WTC11 (cell line): ENCODE measurements at regions of chr4 and their contacts with region 1.

Region 1: DNA sequence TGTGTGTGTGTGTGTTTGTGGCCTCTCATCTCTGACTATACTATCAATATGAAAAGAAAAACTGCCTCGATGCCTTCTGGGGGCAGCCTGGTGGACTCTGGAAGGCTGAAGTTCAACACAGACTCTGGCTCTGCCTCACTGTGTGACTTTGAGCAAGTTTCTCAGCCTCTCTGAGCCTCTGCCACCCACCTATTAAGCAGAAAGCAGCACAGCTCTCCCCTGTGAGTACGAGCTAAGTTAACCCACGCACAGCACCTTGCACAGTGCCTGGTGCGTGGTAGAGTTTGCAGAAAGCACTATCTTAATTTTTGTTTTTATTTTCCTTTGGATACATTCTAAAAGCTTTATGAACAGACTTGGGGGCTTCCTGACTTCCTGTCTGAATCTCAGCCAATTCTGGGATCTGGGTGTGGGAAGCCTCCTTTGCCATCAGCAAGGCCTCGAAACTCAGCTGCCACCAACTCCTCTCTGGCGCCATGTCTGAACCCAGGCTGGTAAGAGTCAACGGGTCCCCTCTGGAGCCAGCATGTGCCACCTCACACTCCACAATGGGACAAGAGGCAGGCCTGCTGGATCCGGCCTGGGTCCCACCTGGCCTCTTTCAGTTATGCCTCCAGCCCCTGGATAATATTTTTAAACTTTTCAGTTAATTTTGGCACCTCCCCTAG is 57.3 kb downstream of the JAKMIP1 start:
- DNase-seq: no peak
- ATAC-seq: no peak
- H3K4me3 Mint-ChIP-seq: no peak overlapping the region
- H3K27ac Mint-ChIP-seq: no peak overlapping the region
- H3K4me1 Mint-ChIP-seq: peaks cover 8% of the 10 kb centered on the region
- H3K27me3 Mint-ChIP-seq: no peaks in the 10 kb centered on the region
- CTCF ChIP-seq: no peak

Region 2: DNA sequence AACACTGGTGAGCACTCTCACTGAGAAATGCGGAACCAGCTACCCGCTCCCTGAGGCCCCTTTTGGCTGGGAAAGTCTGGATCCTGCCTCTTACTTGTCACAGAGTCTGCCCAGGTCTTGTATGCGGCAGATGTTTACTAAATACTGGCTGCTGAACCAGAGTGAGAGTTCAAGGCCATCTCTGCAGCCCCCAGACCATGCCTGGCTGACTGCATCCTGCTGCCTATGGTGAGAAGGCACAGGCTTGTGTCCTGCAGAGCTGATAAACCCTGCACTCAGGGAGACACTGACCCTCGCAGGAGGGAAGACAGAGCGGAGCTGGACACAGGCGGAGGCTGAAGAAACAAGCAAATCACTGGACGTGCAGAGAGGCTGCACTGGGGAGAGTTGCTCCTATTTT is 10.8 kb after region 1 on chr4:
- CTCF ChIA-PET with region 1: interaction called, 10 read pairs
- POLR2A ChIA-PET with region 1: no interaction called
- DNase-seq: no peak
- ATAC-seq: peak; percentile 17; the same call in 1 of the 2 replicates
- H3K4me3 Mint-ChIP-seq: no peak overlapping the region; the same call in 1 of the 2 replicates
- H3K27ac Mint-ChIP-seq: 0 out of 2 replicates have a peak overlapping the region, but pooled peaks have one; percentile 67
- H3K4me1 Mint-ChIP-seq: peaks cover 27% of the 10 kb centered on the region
- H3K27me3 Mint-ChIP-seq: no peaks in the 10 kb centered on the region
- CTCF ChIP-seq: no peak